Body of pancreas (tissue), 4 donors: ENCODE measurements at regions of chr12 and their contacts with region 1.

Region 1: DNA sequence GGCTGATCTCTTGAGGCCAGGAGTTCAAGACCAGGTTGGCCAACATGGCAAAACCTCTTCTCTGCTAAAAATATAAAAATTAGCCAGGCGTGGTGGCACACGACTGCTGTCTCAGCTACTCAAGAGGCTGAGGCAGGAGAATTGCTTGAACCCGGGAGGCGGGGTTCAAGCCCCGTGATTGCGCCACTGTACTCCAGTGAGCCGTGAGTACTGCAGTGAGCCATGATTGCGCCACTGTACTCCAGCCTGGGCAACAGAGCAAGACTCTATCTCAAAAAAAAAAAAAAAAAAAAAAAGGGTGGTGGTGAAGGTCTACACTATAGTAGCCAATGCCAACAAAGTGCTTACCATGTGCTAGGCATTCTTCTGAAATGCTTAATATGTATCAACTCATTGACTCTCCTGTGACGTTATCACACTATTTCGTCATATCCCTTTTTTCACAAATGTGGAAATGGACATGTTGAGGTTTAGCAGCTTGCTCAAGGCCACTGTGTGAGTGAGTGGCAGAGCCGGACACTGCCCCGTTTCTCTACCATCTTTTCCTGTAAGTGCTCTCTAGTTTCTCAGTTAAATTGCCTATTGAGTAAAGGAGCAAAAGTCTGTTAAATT is 59.6 kb downstream of the GNS start:
- DNase-seq: peak in 1 of 4 donors; percentile 30
- ATAC-seq: no peak
- H3K4me3 ChIP-seq: no peak overlapping the region
- H3K27ac ChIP-seq: no peak overlapping the region
- H3K4me1 ChIP-seq: peaks cover 5% of the 10 kb centered on the region
- H3K27me3 ChIP-seq: no peaks in the 10 kb centered on the region
- CTCF ChIP-seq: no peak
- POLR2A ChIP-seq: no peak

Region 2: DNA sequence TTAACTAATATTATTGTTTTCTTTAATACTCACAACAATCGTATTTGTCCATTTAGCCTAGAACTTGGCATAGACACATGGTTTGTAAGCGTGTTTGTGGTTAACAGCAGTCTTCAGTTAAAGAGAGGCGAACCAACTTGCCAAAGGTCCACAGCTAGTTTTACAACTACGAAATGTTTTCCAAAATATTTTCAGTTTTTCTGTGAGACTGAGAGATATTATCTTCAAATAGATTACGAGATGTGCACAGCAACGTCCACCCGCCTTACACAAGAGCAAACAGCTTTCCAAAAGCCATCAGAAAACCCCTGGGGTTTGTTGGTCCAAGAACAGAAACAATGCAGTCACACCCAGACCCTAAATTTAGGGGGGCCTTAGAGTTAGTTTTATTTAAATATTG is 147.9 kb before region 1 on chr12:
- intact Hi-C with region 1: loop called (anchors 5 kb)
- DNase-seq: no peak
- ATAC-seq: no peak
- H3K4me3 ChIP-seq: no peak overlapping the region
- H3K27ac ChIP-seq: no peak overlapping the region
- H3K4me1 ChIP-seq: no peaks in the 10 kb centered on the region
- H3K27me3 ChIP-seq: no peaks in the 10 kb centered on the region
- CTCF ChIP-seq: no peak
- POLR2A ChIP-seq: no peak